ENCODE measurements at regions of chr9 and their contacts with region 1.

Region 1: DNA sequence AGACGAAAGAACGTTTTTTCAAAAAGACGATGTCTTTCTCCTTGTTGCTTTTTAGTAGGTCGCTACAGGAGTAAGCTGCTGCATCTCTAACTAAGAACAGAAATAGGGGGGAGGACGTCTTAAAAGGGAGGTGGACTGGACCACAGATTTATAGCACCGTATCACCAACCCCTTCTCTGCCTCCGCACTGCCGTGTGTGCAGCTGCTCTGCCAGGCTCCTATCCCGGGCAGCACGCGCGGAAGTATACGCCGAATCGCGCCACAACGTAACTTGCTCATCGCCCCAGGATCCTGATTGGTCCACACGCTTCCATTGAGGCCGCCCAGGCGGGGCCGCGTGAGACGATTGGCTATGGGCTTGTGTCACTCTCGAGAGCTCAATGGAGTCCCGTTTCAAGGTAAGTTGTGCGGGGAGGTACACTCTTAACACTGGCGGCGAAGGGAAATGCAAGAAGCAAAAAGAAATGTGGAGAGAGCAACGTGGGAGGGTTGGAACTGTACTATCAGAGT is at the start of gene ELAVL2:
- DNase-seq: peak; percentile 39
- H3K4me3 Mint-ChIP-seq: no peak within 1 kb of the TSS
- H3K27ac Mint-ChIP-seq: no peak within 1 kb of the TSS
- H3K4me1 Mint-ChIP-seq: no peaks in the 10 kb centered on the region
- H3K27me3 Mint-ChIP-seq: peaks cover 50% of the 10 kb centered on the region
- total RNA-seq, gene ELAVL2: not detected

Region 2: GRCh38 chr9:21974548-21975409 is 1851.4 kb before region 1 on chr9:
- CTCF ChIA-PET with region 1: no interaction called
- POLR2A ChIA-PET with region 1: no interaction called
- intact Hi-C with region 1: loop called (anchors 10 kb)
- DNase-seq: peak; percentile 70
- H3K4me3 Mint-ChIP-seq: peak overlapping the region; percentile 75
- H3K27ac Mint-ChIP-seq: no peak overlapping the region
- H3K4me1 Mint-ChIP-seq: peaks cover 13% of the 10 kb centered on the region
- H3K27me3 Mint-ChIP-seq: peaks cover 71% of the 10 kb centered on the region

Region 3: GRCh38 chr9:22060831-22061383 is 1765.3 kb before region 1 on chr9:
- CTCF ChIA-PET with region 1: no interaction called
- POLR2A ChIA-PET with region 1: no interaction called
- intact Hi-C with region 1: no loop called
- DNase-seq: no peak
- H3K4me3 Mint-ChIP-seq: no peak overlapping the region
- H3K27ac Mint-ChIP-seq: no peak overlapping the region
- H3K4me1 Mint-ChIP-seq: peaks cover 18% of the 10 kb centered on the region
- H3K27me3 Mint-ChIP-seq: peaks cover 11% of the 10 kb centered on the region

Region 4: GRCh38 chr9:23693374-23693773 is 132.8 kb before region 1 on chr9:
- CTCF ChIA-PET with region 1: no interaction called
- POLR2A ChIA-PET with region 1: no interaction called
- intact Hi-C with region 1: no loop called
- DNase-seq: no peak
- H3K4me3 Mint-ChIP-seq: no peak overlapping the region
- H3K27ac Mint-ChIP-seq: no peak overlapping the region
- H3K4me1 Mint-ChIP-seq: no peaks in the 10 kb centered on the region
- H3K27me3 Mint-ChIP-seq: no peaks in the 10 kb centered on the region

Region 5: DNA sequence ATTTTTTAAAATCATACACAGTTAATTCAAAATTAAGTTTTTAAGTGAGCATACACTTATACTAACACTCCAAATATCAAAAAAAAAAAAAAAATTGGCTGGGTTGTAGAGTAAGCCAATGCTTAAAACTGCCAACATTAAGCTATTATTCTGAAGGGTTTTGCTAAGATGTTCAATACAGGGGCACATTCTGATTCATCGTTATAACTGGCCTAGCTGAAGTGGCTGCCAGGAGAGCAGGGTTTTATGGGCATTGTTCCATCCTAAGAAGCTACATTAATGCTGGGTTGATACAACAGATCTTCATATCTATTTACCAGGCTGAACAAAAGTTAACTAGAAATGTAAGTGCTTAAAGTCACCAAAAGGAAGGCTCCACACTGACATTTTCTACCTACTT is 13.5 kb before region 1 on chr9:
- CTCF ChIA-PET with region 1: no interaction called
- POLR2A ChIA-PET with region 1: no interaction called
- intact Hi-C with region 1: no loop called
- DNase-seq: no peak
- H3K4me3 Mint-ChIP-seq: no peak overlapping the region
- H3K27ac Mint-ChIP-seq: no peak overlapping the region
- H3K4me1 Mint-ChIP-seq: no peaks in the 10 kb centered on the region
- H3K27me3 Mint-ChIP-seq: no peaks in the 10 kb centered on the region

Measured in activated CD4-positive, alpha-beta memory T cell treated with anti-CD3 and anti-CD28 coated beads for 36 hours (primary cell).